ENCODE measurements at regions of chr6 and their contacts with region 1.

Region 1: GRCh38 chr6:109891924-109892323 is 86.2 kb upstream of the GPR6 start:
- DNase-seq: no peak

Region 2: GRCh38 chr6:109867009-109867969 is 24.6 kb before region 1 on chr6:
- intact Hi-C with region 1: loop called in 1 of 2 experiments (anchors 1 kb)
- DNase-seq: peak; percentile 83

Region 3: DNA sequence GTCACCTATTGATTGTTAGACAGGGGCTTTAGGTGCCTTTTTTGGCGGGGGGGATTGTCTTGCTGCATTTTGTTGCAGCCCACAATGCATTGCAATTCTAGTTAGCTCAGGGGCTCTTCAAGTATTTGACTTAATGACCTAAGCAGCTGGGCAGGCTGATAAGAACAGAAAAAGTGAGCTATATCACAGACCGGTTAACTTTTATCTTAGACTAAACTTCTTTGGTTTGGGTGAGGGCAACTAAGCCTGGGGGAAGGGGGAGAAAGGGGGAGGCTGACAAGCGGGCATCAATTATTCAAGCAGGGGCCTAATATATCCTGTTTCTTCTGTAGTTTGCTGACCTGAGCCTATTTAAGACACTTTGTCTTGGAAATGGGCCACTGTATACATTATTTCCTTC is 20.2 kb after region 1 on chr6:
- intact Hi-C with region 1: no loop called
- DNase-seq: no peak